MCF 10A (cell line): ENCODE measurements at regions of chr5 and their contacts with region 1.

Region 1: GRCh38 chr5:96344678-96345577 is 88.1 kb downstream of the PCSK1 start:
- DNase-seq: peak; percentile 83
- H3K4me3 Mint-ChIP-seq: no peak overlapping the region
- H3K27ac Mint-ChIP-seq: no peak overlapping the region
- H3K4me1 Mint-ChIP-seq: peaks cover 16% of the 10 kb centered on the region
- H3K27me3 Mint-ChIP-seq: no peaks in the 10 kb centered on the region
- CTCF ChIP-seq: peak; percentile 67

Region 2: GRCh38 chr5:96434201-96434645 is 89.3 kb after region 1 on chr5:
- CTCF ChIA-PET with region 1: interaction called, 8 read pairs
- POLR2A ChIA-PET with region 1: interaction called, 3 read pairs
- intact Hi-C with region 1: loop called (anchors 1 kb)
- DNase-seq: peak; percentile 78
- H3K4me3 Mint-ChIP-seq: no peak overlapping the region
- H3K27ac Mint-ChIP-seq: no peak overlapping the region
- H3K4me1 Mint-ChIP-seq: peaks cover 5% of the 10 kb centered on the region
- H3K27me3 Mint-ChIP-seq: peaks cover 42% of the 10 kb centered on the region
- CTCF ChIP-seq: no peak

Region 3: GRCh38 chr5:96548947-96549346 is 204.0 kb after region 1 on chr5:
- CTCF ChIA-PET with region 1: interaction called, 31 read pairs
- POLR2A ChIA-PET with region 1: interaction called, 8 read pairs
- intact Hi-C with region 1: no loop called
- DNase-seq: no peak
- H3K4me3 Mint-ChIP-seq: no peak overlapping the region
- H3K27ac Mint-ChIP-seq: no peak overlapping the region
- H3K4me1 Mint-ChIP-seq: peaks cover 7% of the 10 kb centered on the region
- H3K27me3 Mint-ChIP-seq: no peaks in the 10 kb centered on the region
- CTCF ChIP-seq: no peak

Region 4: DNA sequence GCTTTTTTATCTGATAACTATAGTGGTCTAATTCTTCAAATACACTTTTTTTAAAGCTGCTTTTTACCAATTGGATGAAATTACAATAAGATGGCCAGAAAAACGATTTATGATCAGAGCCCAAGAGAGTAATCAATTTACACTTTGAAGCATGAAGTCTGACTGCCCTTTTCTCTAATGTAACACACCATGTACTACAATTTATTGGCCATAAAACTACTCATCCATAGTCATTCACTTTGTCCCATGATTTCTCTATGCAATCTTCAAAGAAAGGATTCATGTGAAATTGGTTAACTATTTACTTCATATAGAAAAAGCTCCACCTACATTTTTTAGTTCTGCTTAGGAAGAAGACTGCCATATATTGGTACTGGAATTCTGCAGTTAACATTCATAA is 243.6 kb after region 1 on chr5:
- CTCF ChIA-PET with region 1: interaction called, 492 read pairs
- POLR2A ChIA-PET with region 1: interaction called, 3 read pairs
- intact Hi-C with region 1: no loop called
- DNase-seq: no peak
- H3K4me3 Mint-ChIP-seq: no peak overlapping the region
- H3K27ac Mint-ChIP-seq: no peak overlapping the region
- H3K4me1 Mint-ChIP-seq: peaks cover 9% of the 10 kb centered on the region
- H3K27me3 Mint-ChIP-seq: no peaks in the 10 kb centered on the region
- CTCF ChIP-seq: no peak